ENCODE measurements at regions of chr7 and their contacts with region 1.

Region 1: GRCh38 chr7:116671681-116672595 is at the start of gene MET:
- H3K4me3 Mint-ChIP-seq: peak within 1 kb of the TSS; percentile 69
- H3K27ac Mint-ChIP-seq: no peak within 1 kb of the TSS
- H3K4me1 Mint-ChIP-seq: peaks cover 23% of the 10 kb centered on the region
- H3K27me3 Mint-ChIP-seq: peaks cover 50% of the 10 kb centered on the region

Region 2: GRCh38 chr7:116588641-116589594 is 83.0 kb before region 1 on chr7:
- intact Hi-C with region 1: loop called (anchors 5 kb)
- H3K4me3 Mint-ChIP-seq: no peak overlapping the region
- H3K27ac Mint-ChIP-seq: no peak overlapping the region
- H3K4me1 Mint-ChIP-seq: peaks cover 30% of the 10 kb centered on the region
- H3K27me3 Mint-ChIP-seq: peaks cover 23% of the 10 kb centered on the region

Region 3: GRCh38 chr7:116653204-116653603 is 18.7 kb before region 1 on chr7:
- intact Hi-C with region 1: no loop called
- H3K4me3 Mint-ChIP-seq: no peak overlapping the region
- H3K27ac Mint-ChIP-seq: no peak overlapping the region
- H3K4me1 Mint-ChIP-seq: peaks cover 5% of the 10 kb centered on the region
- H3K27me3 Mint-ChIP-seq: peaks cover 1% of the 10 kb centered on the region